ENCODE measurements at regions of chr14 and their contacts with region 1.

Region 1: DNA sequence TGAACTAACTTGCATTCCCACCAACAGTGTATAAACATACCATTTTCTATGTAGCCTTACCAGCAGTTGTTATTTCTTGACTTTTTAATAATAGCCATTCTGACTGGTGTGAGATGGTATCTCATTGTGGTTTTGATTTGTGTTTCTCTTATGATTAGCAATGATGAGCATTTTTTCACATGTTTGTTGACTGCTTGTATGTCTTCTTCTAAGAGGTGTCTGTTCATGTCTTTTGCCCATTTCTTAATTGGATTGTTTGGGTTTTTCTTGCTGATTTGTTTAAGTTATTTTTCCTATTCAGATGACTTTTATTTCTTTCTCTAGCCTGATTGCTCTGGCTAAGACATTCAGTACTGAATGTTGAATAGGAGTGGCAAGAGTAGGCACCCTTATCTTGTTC is 230.3 kb downstream of the DAD1 start:
- DNase-seq: no peak
- H3K4me3 ChIP-seq: no peak overlapping the region
- H3K27ac ChIP-seq: no peak overlapping the region
- H3K4me1 ChIP-seq: no peaks in the 10 kb centered on the region
- H3K27me3 ChIP-seq: no peaks in the 10 kb centered on the region
- CTCF ChIP-seq: no peak

Region 2: GRCh38 chr14:21191809-21192446 is 1166.8 kb before region 1 on chr14:
- CTCF ChIA-PET with region 1: interaction called, 10 read pairs
- POLR2A ChIA-PET with region 1: no interaction called
- intact Hi-C with region 1: no loop called
- DNase-seq: peak in 1 of 2 experiments; percentile 62
- H3K4me3 ChIP-seq: no peak overlapping the region
- H3K27ac ChIP-seq: no peak overlapping the region
- H3K4me1 ChIP-seq: no peaks in the 10 kb centered on the region
- H3K27me3 ChIP-seq: no peaks in the 10 kb centered on the region
- CTCF ChIP-seq: no peak

Region 3: DNA sequence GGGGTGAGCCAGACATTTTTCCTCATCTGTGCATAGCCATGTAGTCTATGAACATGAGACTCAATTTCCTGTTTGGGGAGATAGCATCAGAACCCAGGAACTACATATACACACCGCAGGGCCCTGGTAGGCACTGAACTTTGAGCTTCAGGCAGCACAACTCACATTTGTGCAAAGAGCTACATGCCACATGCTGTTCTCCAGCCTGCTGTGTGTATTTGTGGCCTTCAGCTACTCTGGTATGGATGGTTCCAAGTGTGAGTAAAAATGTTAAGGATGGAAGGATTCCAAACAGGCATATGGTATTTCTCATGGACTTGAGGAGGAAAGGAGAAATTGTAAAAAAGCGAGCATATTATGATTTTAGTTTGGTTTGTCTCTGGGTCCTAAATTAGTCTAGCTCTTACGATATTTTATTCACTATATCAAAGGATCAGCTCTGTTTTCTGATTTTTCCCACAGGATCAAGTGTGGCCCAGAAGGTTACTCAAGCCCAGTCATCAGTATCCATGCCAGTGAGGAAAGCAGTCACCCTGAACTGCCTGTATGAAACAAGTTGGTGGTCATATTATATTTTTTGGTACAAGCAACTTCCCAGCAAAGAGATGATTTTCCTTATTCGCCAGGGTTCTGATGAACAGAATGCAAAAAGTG is 262.7 kb before region 1 on chr14:
- CTCF ChIA-PET with region 1: no interaction called
- POLR2A ChIA-PET with region 1: no interaction called
- intact Hi-C with region 1: no loop called
- DNase-seq: no peak
- H3K4me3 ChIP-seq: no peak overlapping the region
- H3K27ac ChIP-seq: no peak overlapping the region
- H3K4me1 ChIP-seq: no peaks in the 10 kb centered on the region
- H3K27me3 ChIP-seq: no peaks in the 10 kb centered on the region
- CTCF ChIP-seq: no peak

Measured in PC-9 (cell line).